ENCODE measurements at regions of chr22 and their contacts with region 1.

Region 1: GRCh38 chr22:18077639-18078328 is at the start of gene PEX26:
- DNase-seq: peak; percentile 93
- H3K4me3 ChIP-seq: peak within 1 kb of the TSS; percentile 83 to 90 (median 86)
- H3K27ac ChIP-seq: peak within 1 kb of the TSS; percentile 56
- H3K4me1 ChIP-seq: peaks cover 21% of the 10 kb centered on the region
- H3K27me3 ChIP-seq: no peaks in the 10 kb centered on the region
- CTCF ChIP-seq: no peak
- POLR2A ChIP-seq: no peak
- total RNA-seq, gene PEX26: 40.9 and 44.4 TPM in 2 replicates

Region 2: DNA sequence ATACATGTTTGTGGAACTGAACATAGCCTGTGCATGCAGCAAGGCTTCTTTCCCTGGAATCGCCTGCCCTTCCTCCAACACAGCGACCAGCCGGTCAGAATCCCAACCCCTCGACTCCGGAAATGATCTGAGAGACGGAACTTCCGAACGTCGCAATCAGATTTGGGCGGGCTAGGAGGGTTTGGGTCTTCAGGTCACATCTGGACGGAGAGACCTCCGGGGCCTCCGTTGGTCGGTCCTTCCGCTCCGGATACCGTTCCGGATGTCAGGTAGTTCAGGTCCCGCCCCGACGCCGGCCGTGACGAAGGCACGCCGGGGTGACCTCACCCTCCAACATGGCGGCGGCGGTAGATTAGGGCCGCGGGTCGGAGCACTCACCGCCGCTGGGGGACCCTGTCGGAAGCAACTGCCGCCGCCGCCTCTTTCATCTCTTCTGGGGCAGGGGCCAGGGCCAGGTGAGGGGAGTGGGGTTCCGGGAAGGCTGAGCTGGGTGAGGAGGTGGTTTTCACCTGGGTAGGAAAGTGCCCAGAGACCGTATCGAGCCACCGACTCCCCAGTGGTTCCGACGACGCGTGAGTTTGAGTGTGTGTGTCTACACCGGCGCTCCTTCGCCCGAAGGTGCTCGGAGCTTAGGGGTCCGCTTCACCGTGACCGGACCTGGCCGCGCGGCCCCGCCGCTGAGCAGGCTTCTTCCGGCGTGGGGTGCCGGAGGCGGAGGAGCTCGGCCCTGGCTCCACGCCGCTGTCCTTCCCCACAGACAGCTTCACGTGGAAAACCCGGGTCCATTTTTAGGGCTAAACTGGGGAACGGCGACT is 439.1 kb before region 1 on chr22 and contains the start of gene BCL2L13:
- CTCF ChIA-PET with region 1: no interaction called
- POLR2A ChIA-PET with region 1: no interaction called
- dilution Hi-C with region 1: no loop called
- intact Hi-C with region 1: loop called (anchors 10 kb)
- DNase-seq: peak; percentile 85
- H3K4me3 ChIP-seq: peak within 1 kb of the TSS; percentile 60 to 92 (median 86)
- H3K27ac ChIP-seq: peak within 1 kb of the TSS; percentile 88
- H3K4me1 ChIP-seq: peaks cover 16% of the 10 kb centered on the region
- H3K27me3 ChIP-seq: no peaks in the 10 kb centered on the region
- CTCF ChIP-seq: no peak
- POLR2A ChIP-seq: peak; percentile 76
- total RNA-seq, gene BCL2L13: 36.2 TPM in 2 replicates

Region 3: DNA sequence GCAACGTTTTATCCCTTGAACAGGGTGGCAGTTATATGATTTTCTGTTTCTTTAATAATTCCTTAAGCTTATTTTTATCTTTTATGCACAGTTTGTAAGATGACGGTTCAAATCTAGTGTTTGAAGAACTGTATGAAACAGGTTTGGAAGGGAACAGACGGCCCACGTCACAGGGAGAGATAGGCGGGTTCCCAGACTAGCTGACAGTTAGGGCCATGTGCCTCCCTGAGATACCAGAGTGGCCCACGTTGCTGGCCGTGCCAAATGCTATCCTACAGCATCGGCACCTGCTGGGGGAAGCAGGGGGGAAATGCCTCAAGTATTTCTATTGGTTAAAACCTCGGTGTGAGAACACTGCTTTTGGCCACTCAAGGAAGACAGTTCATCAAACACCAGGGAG is 253.3 kb before region 1 on chr22:
- CTCF ChIA-PET with region 1: interaction called, 385 read pairs
- POLR2A ChIA-PET with region 1: no interaction called
- dilution Hi-C with region 1: no loop called
- intact Hi-C with region 1: no loop called
- DNase-seq: no peak
- H3K4me3 ChIP-seq: no peak overlapping the region
- H3K27ac ChIP-seq: no peak overlapping the region
- H3K4me1 ChIP-seq: no peaks in the 10 kb centered on the region
- H3K27me3 ChIP-seq: no peaks in the 10 kb centered on the region
- CTCF ChIP-seq: no peak
- POLR2A ChIP-seq: no peak

Region 4: DNA sequence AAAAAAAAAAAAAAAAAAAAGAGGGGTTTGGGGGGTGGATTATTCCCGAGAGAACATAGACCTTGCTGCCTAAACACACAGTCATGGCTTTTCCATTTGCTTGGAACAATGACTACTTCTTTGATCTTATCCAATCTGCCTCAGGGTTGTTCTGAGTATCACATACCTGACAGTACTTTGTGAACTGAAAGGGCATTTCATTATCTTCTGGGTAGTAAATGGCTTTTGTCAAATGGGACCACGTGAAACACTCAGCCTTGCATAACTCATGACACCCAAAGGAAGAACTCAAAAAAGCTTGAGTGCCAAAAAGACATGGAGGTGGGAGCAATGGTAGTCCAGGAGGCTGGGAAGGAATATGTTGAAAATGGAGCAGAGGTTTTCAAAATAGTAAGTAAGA is 180.4 kb before region 1 on chr22:
- CTCF ChIA-PET with region 1: interaction called, 55 read pairs
- POLR2A ChIA-PET with region 1: no interaction called
- dilution Hi-C with region 1: no loop called
- intact Hi-C with region 1: no loop called
- DNase-seq: no peak
- H3K4me3 ChIP-seq: no peak overlapping the region
- H3K27ac ChIP-seq: no peak overlapping the region
- H3K4me1 ChIP-seq: no peaks in the 10 kb centered on the region
- H3K27me3 ChIP-seq: no peaks in the 10 kb centered on the region
- CTCF ChIP-seq: no peak
- POLR2A ChIP-seq: no peak

Region 5: DNA sequence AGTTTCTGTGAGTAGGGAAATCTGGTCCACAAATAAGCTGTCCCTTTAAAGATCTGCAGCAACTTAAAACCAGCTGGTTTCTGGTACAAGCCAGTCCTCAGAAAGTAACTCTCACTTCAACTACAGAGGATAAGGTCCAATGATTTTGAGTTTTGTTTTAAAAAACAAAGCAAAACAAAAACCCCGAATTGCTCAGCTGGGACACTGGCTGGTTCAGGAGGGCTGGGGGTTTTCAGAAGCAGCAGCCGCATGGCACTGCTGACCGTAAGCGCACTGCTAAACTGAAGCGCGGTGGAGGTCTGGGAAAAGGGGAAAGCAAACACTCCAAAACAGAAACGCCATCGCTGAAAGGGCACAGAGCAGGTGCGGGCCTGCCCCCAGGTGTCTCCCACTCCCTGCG is 113.1 kb before region 1 on chr22:
- CTCF ChIA-PET with region 1: no interaction called
- POLR2A ChIA-PET with region 1: no interaction called
- dilution Hi-C with region 1: no loop called
- intact Hi-C with region 1: no loop called
- DNase-seq: no peak
- H3K4me3 ChIP-seq: no peak overlapping the region
- H3K27ac ChIP-seq: no peak overlapping the region
- H3K4me1 ChIP-seq: peaks cover 5% of the 10 kb centered on the region
- H3K27me3 ChIP-seq: no peaks in the 10 kb centered on the region
- CTCF ChIP-seq: no peak
- POLR2A ChIP-seq: no peak

Region 6: DNA sequence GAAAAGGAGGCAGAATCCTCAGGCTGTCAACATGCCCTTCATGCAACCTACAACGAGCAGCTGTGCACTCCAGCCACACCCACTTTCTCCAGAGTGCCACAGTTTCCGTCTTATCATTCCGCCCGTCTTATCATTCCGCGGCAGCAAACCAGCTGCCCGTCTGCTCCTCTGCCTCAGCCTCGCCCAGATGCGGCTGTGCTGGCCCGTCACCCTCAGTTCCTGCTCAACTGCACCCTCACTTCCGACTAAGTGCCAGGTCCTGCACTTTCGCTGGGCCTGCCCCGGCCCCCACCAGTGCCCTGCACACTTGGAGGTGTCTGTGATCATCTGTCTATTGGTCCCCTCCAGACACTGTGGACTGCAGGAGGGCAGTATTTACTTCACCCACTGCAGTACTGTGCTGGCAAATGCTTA is 97.1 kb before region 1 on chr22:
- CTCF ChIA-PET with region 1: no interaction called
- POLR2A ChIA-PET with region 1: no interaction called
- dilution Hi-C with region 1: no loop called
- intact Hi-C with region 1: no loop called
- DNase-seq: peak; percentile 58
- H3K4me3 ChIP-seq: no peak overlapping the region
- H3K27ac ChIP-seq: no peak overlapping the region
- H3K4me1 ChIP-seq: peaks cover 23% of the 10 kb centered on the region
- H3K27me3 ChIP-seq: no peaks in the 10 kb centered on the region
- CTCF ChIP-seq: no peak
- POLR2A ChIP-seq: no peak

Region 7: GRCh38 chr22:18001040-18001893 is 76.5 kb before region 1 on chr22:
- CTCF ChIA-PET with region 1: interaction called, 12 read pairs
- POLR2A ChIA-PET with region 1: no interaction called
- dilution Hi-C with region 1: no loop called
- intact Hi-C with region 1: loop called (anchors 1 kb)
- DNase-seq: peak; percentile 96
- H3K4me3 ChIP-seq: peak overlapping the region; percentile 45 to 86 (median 82)
- H3K27ac ChIP-seq: peak overlapping the region; percentile 64
- H3K4me1 ChIP-seq: peaks cover 5% of the 10 kb centered on the region
- H3K27me3 ChIP-seq: no peaks in the 10 kb centered on the region
- CTCF ChIP-seq: peak; percentile 31 to 41
- POLR2A ChIP-seq: peak; percentile 89

Region 8: DNA sequence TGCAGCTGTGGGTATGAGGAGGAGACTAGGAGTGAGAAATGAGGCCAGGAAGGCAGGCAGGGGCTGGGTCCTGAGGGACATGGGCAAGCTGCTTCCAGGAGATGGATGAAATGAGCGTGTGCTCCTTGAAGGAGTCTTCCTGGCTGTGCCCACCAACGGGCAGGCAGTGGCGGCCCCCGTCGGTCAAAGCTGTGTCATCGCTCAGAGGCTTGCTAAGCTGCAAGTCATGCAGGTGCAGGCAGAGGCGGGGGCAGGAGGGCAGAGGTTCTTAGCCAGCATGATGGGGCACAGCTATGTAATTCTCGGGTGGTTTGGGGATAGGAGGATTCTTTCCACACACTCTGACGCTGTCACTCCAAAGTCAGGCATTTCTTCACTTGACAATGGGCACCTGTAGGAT is 12.5 kb before region 1 on chr22:
- CTCF ChIA-PET with region 1: interaction called, 19 read pairs
- POLR2A ChIA-PET with region 1: no interaction called
- dilution Hi-C with region 1: no loop called
- intact Hi-C with region 1: no loop called
- DNase-seq: no peak
- H3K4me3 ChIP-seq: no peak overlapping the region
- H3K27ac ChIP-seq: no peak overlapping the region
- H3K4me1 ChIP-seq: no peaks in the 10 kb centered on the region
- H3K27me3 ChIP-seq: peaks cover 20 to 29% of the 10 kb centered on the region in 2 experiments
- CTCF ChIP-seq: no peak
- POLR2A ChIP-seq: no peak

Region 9: DNA sequence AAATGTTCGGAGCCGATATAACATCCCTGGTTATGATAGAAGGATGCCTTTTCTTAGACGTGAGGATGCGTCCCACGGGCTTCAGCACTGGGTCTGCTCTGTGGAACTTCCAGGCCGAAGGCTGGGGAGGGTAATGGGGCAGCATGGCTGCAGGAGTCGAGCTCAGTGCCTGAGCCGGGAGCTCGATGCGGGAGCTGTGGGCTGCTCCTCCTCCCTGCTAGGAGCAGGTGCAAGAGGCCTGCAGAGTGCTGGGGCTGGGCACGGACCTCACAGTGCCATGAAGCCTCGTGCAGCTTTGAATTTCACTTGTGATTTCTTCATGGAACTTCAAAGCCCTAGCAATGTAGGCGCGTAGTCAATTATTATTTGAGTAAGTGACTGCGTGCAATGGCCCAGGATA is 38.9 kb after region 1 on chr22:
- CTCF ChIA-PET with region 1: no interaction called
- POLR2A ChIA-PET with region 1: no interaction called
- dilution Hi-C with region 1: no loop called
- intact Hi-C with region 1: no loop called
- DNase-seq: no peak
- H3K4me3 ChIP-seq: no peak overlapping the region
- H3K27ac ChIP-seq: no peak overlapping the region
- H3K4me1 ChIP-seq: peaks cover 12% of the 10 kb centered on the region
- H3K27me3 ChIP-seq: no peaks in the 10 kb centered on the region
- CTCF ChIP-seq: no peak
- POLR2A ChIP-seq: no peak